Activated T-helper 2 cell treated with anti-CD3 and anti-CD28 coated beads, Interferon-gamma antibody, Interleukin-2, Interleukin-4, amounts not matched to agents 10 μg/mL and 5 μg/mL and 100 μg/mL, durations not matched to agents 14 hours and 24 hours and 36 hours (primary cell): ENCODE measurements at regions of chr12 and their contacts with region 1.

Region 1: GRCh38 chr12:49567611-49568441 is at the start of gene MCRS1:
- DNase-seq: peak; percentile 87
- H3K4me3 Mint-ChIP-seq: peak within 1 kb of the TSS; percentile 99
- H3K27ac Mint-ChIP-seq: peak within 1 kb of the TSS; percentile 99
- H3K4me1 Mint-ChIP-seq: peaks cover 42% of the 10 kb centered on the region
- H3K27me3 Mint-ChIP-seq: no peaks in the 10 kb centered on the region
- total RNA-seq, gene MCRS1: 67.9 and 73.0 TPM in 2 replicates

Region 2: GRCh38 chr12:49612210-49612609 is 44.4 kb after region 1 on chr12:
- intact Hi-C with region 1: no loop called
- DNase-seq: no peak
- H3K4me3 Mint-ChIP-seq: no peak overlapping the region
- H3K27ac Mint-ChIP-seq: no peak overlapping the region
- H3K4me1 Mint-ChIP-seq: peaks cover 6% of the 10 kb centered on the region
- H3K27me3 Mint-ChIP-seq: peaks cover 9% of the 10 kb centered on the region

Region 3: DNA sequence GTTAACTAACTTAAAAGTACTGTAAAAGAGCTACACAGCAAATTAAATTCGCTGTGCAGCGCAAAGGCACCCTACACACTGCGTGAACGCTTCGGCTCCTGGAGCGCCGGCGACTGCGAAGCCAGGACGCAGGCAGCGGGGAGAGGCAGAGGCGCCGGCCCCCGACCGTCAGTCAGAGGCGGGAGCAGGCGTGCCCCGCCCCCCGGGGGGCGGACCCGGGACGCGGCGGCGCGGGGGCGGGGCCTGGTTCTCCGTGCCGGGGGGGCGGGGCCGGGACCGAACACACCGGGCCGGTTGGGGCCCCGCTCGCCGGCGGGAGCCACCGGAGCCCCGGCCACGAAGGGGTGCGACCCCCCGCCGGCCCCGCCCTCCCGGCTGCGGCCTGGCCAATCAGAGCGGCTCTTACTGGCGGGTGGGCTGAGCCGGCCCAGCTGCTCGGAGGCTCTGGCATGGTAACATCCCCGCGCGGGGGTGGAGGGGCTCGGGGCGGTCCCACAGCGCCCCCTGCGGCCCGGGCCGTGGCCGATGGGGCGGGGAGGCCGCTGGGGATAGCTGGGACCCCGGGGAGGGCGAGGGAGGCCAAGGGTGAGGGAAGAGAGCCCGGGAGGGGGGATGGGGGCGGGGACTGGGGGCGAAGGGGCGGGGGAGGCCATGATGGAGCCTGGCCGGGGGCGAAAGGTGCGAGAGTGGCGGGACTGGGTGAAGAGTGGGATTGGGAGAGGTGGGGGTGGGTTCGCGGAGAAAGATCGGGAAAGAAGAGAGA is 55.5 kb after region 1 on chr12 and contains the start of gene PRPF40B:
- intact Hi-C with region 1: loop called (anchors 5 kb)
- DNase-seq: peak; percentile 80
- H3K4me3 Mint-ChIP-seq: peak within 1 kb of the TSS; percentile 80
- H3K27ac Mint-ChIP-seq: peak within 1 kb of the TSS; percentile 34
- H3K4me1 Mint-ChIP-seq: peaks cover 21% of the 10 kb centered on the region
- H3K27me3 Mint-ChIP-seq: peaks cover 24% of the 10 kb centered on the region
- total RNA-seq, gene PRPF40B: 10.1 and 13.3 TPM in 2 replicates